ENCODE measurements at regions of chr15 and their contacts with region 1.

Region 1: GRCh38 chr15:63226966-63227401 is 37.6 kb downstream of the RAB8B start:
- DNase-seq: no peak

Region 2: DNA sequence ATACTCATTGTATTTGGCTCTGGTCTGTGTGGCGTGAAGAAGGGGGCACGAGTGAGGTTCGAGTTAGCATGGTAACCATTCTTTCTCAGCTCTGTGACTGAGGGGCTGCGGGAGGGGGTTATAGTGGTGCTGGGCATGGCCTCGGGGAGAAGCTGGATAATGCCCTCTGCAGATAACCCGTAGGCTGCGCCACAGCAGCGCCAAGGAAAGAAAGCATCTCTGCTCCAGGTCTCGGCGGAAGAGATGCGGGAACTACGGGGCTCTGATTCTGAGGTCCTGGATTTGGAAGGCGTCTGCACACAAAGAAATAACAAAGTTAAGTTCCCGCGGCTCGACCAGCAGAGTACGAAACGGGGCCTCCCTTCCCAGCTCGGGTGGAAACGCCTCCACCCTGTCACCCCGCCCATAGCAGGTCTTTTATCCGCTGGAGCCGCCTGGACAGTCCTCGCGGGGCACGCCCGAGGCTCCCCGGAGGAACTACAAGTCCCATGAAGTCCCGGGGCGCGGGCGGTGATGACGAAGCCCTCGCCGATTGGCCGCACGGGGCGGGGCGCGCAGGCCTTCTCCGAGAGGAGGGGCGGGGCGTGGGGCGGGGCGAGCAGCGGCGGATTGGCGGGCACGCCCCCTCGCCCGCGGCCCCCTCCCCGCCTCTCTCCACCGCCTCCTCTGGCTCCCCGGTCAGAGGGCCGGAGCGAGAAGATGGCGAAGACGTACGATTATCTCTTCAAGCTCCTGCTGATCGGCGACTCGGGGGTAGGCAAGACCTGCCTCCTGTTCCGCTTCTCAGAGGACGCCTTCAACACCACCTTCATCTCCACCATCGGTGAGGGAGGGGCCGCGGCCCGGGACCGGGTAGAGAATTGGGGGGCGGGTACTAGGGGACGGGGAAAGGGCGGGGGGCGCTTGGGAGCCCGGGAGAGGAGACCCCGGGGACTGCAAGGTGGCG is 37.8 kb before region 1 on chr15 and contains the start of gene RAB8B:
- intact Hi-C with region 1: loop called (anchors 5 kb)
- DNase-seq: peak; percentile 99
- total RNA-seq, gene RAB8B: 8.7 TPM

Measured in cardiac septum (tissue), 1 donor.